Left ventricle myocardium inferior (tissue), 1 donor: ENCODE measurements at regions of chr17 and their contacts with region 1.

Region 1: GRCh38 chr17:20121359-20122253 is 112.4 kb downstream of the SPECC1 start:
- DNase-seq: peak; percentile 46
- H3K4me3 ChIP-seq: no peak overlapping the region
- H3K27ac ChIP-seq: peak overlapping the region; percentile 25
- H3K4me1 ChIP-seq: peaks cover 36% of the 10 kb centered on the region
- H3K27me3 ChIP-seq: no peaks in the 10 kb centered on the region
- CTCF ChIP-seq: peak; percentile 91

Region 2: DNA sequence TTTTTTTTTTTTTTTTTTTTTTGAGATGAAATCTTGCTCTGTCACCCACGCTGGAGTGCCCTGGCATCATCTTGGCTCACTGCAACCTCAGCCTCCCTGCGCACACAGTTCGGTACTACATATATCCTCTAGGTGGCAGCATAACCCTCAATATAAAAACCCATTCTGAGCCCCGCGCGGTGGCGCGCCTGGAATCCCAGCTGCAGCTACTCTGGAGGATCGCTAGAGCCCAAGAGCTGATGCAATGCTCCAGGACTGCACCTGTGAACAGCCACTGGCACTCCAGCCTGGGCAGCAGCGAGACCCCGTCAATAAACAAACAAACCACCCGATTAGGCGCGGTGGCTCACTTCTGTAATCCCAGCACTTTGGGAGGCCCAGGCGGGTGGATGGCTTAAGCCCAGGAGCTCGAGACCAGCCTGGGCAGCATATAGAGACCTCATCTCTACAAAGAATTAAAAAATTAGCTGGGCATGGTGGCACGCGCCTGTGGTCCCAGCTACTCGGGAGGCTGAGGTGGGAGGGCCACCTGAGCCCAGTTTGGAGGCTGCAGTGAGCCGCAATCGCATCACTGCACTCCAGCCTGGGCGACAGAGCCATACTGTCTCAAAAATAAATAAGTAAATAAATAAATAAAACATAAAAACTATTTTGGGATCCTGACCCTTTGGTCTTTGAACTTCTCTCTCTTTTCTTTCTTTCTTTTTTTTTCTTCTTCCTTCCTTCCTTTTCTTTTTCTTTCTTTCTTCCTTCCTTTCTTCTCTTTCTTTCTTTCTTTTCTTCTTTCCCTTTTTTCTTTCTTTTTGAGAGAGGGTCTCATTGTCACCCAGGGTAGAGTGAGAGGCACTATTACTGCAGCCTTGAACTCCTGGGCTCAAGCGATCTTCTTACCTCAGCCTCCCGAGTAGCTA is 128.5 kb before region 1 on chr17:
- intact Hi-C with region 1: loop called (anchors 2 kb)
- DNase-seq: peak; percentile 83
- H3K4me3 ChIP-seq: peak overlapping the region; percentile 25
- H3K27ac ChIP-seq: no peak overlapping the region
- H3K4me1 ChIP-seq: peaks cover 4% of the 10 kb centered on the region
- H3K27me3 ChIP-seq: peaks cover 37% of the 10 kb centered on the region
- CTCF ChIP-seq: peak; percentile 82

Region 3: DNA sequence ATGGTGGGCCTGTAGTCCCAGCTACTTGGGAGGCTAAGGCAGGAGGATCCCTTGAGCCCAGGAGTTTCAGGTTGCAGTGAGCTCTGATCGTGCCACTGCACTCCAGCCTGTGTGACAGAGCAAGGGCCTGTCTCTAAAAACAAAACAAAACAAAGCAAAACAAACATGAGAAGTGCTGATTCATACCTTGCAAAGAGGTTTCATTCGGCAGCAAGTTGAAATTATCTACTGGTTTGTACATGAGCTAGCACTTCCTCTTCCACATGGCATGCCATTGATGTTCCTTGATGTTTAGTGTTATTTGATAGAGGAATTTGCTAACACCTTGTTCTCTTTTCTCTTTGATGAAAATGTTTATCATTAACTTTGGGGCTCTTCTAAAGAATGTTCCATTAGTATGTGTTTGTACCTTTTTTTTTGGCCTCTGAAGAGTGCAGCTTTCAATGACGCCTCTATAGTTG is 61.8 kb before region 1 on chr17:
- intact Hi-C with region 1: no loop called
- DNase-seq: no peak
- H3K4me3 ChIP-seq: no peak overlapping the region
- H3K27ac ChIP-seq: no peak overlapping the region
- H3K4me1 ChIP-seq: peaks cover 20% of the 10 kb centered on the region
- H3K27me3 ChIP-seq: no peaks in the 10 kb centered on the region
- CTCF ChIP-seq: no peak

Region 4: GRCh38 chr17:20226814-20227482 is 105.3 kb after region 1 on chr17:
- intact Hi-C with region 1: loop called (anchors 5 kb)
- DNase-seq: peak; percentile 85
- H3K4me3 ChIP-seq: no peak overlapping the region
- H3K27ac ChIP-seq: no peak overlapping the region
- H3K4me1 ChIP-seq: peaks cover 3% of the 10 kb centered on the region
- H3K27me3 ChIP-seq: no peaks in the 10 kb centered on the region
- CTCF ChIP-seq: peak; percentile 86